IMR-90 (cell line): ENCODE measurements at regions of chr15 and their contacts with region 1.

Region 1: GRCh38 chr15:39756806-39757522 is 25.7 kb downstream of the FSIP1 start:
- DNase-seq: peak; percentile 83
- ATAC-seq: peak; percentile 35; the same call in 1 of the 2 replicates
- H3K4me3 ChIP-seq: no peak overlapping the region
- H3K27ac ChIP-seq: no peak overlapping the region
- H3K4me1 ChIP-seq: no peaks in the 10 kb centered on the region
- H3K27me3 ChIP-seq: no peaks in the 10 kb centered on the region
- CTCF ChIP-seq: peak; percentile 80
- POLR2A ChIP-seq: no peak
- RAD21 ChIP-seq: peak; percentile 76

Region 2: DNA sequence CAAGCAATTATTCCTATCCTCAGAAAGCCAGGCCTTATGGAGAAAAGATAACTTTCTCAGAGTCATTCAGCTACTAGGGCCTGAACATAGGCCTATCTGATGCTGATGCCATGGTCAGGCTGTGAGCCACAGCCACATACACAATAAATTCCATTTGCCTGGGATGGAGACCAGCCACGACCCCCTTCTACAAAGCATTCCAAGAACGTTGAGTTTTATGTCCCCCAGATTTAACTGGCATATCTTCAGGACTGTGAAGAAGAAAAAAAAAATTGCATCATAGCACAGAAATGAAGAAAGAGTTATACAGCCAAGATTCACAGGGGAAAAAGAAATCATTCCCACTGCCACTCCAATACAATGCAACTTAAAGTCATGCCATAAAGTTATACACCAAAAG is 76.1 kb before region 1 on chr15:
- CTCF ChIA-PET with region 1: interaction called, 28 read pairs
- POLR2A ChIA-PET with region 1: no interaction called
- dilution Hi-C with region 1: no loop called
- in situ Hi-C with region 1: loop called (anchors 5 kb)
- intact Hi-C with region 1: loop called (anchors 1 kb)
- DNase-seq: peak; percentile 52
- ATAC-seq: peak; percentile 65
- H3K4me3 ChIP-seq: no peak overlapping the region
- H3K27ac ChIP-seq: no peak overlapping the region
- H3K4me1 ChIP-seq: peaks cover 3% of the 10 kb centered on the region
- H3K27me3 ChIP-seq: no peaks in the 10 kb centered on the region
- CTCF ChIP-seq: no peak
- POLR2A ChIP-seq: no peak
- RAD21 ChIP-seq: no peak